Psoas muscle (tissue), 8 donors: ENCODE measurements at regions of chr2 and their contacts with region 1.

Region 1: DNA sequence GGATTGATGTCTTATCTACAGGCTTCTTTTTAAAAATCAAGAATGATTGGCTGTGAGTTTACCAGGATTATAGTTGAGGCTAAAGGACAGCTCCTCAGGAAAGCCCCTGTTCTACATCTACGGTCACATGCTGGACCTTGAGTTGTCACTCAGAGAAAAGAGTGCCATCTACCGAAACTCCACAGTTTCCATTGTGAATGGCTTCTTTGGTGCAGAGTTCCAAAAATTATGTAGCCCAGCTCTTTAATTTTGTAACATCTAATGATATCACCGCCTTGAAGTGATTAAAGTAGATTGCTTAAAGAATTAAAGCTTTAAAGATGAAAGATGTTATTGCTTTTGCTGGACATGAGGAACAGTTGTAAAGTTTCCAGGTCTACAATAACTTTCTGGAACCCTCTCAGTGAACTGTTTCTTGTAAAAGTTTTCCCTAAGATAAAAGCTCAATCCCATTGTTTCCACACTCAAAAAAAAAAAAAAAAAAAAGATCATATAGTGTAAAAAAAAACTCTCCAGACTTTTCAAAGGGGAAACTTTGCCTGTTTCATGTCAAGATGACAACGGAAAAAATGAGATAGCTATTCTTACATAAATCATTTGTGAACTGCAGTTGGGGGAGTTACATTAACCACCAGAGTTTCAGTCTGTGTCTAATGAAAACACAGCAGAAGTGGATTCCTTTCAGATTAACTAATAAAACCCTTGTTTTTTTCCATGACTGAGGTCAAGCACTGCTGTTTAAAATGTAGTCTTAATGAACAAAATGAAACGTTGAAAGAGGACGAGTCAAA is 4.3 kb downstream of the COL3A1 start:
- DNase-seq: no peak
- ATAC-seq: peak in 3 of 4 donors; percentile 41 to 58 (median 47)
- H3K4me3 ChIP-seq: peak overlapping the region; percentile 52
- H3K27ac ChIP-seq: peak overlapping the region; percentile 24
- H3K4me1 ChIP-seq: no peaks in the 10 kb centered on the region
- H3K27me3 ChIP-seq: no peaks in the 10 kb centered on the region
- CTCF ChIP-seq: peak; percentile 16

Region 2: DNA sequence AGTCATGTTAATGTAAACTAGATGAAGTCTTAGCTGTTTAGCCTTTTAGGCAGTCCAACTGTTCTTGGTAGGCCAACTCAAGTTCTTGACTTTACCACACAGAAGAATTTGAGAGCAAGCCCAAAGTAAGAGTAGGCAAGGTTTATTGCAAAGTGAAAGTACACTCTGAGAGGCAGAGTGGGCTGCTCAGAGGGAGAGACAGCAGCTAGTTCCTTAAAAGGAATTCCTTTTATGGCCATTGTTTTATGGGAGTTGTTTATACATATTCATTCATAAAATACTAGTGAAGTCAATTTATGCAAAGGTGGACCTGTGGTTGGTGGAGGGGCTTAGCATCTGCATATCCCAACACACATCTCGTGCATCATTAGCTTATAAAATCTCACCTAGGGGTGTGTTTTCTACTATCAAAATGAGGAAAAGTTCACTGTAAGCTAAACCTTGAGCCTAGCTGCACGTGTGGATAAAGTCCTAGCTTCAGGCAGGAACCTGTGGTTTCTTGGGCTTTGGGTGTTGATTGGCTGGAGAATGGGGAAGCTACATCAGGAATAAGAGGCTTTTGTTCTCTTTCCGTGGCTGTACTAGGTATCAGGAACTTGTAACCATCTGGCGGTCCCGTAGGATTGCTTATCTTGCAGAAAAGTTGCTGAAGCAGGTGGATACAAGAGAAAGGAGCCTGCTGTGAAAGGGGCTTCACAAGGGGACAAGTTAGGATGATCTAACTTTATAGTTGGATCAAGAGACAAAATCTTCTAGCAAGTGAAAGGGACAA is 797.2 kb before region 1 on chr2:
- intact Hi-C with region 1: loop called in 1 of 2 experiments (anchors 10 kb)
- DNase-seq: no peak
- ATAC-seq: no peak
- H3K4me3 ChIP-seq: no peak overlapping the region
- H3K27ac ChIP-seq: no peak overlapping the region
- H3K4me1 ChIP-seq: no peaks in the 10 kb centered on the region
- H3K27me3 ChIP-seq: no peaks in the 10 kb centered on the region
- CTCF ChIP-seq: no peak

Region 3: GRCh38 chr2:188788621-188789020 is 189.9 kb before region 1 on chr2:
- intact Hi-C with region 1: loop called in 1 of 2 experiments (anchors 10 kb)
- DNase-seq: peak; percentile 54 to 66
- ATAC-seq: peak in 3 of 4 donors; percentile 46 to 69 (median 59)
- H3K4me3 ChIP-seq: peak overlapping the region; percentile 29
- H3K27ac ChIP-seq: peak overlapping the region; percentile 38
- H3K4me1 ChIP-seq: no peaks in the 10 kb centered on the region
- H3K27me3 ChIP-seq: no peaks in the 10 kb centered on the region
- CTCF ChIP-seq: no peak

Region 4: DNA sequence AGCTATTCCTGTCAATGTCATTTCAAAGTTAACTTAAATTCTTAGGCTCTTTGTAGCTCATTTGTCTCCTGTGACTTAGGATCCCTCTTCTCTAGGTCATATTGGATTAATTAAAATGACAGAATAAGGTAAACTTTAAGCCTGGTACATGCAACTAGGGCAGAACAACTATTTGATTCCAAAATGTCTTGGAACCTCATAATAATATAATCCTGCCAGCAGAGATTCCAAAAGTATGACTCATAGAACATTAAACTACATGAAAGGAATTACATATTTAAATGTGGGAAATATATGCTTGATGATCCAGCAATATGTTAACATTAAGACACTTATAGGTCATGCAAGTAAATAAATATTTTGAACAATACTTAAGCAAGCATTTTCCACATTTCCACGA is 59.0 kb after region 1 on chr2:
- intact Hi-C with region 1: no loop called
- DNase-seq: no peak
- ATAC-seq: no peak
- H3K4me3 ChIP-seq: no peak overlapping the region
- H3K27ac ChIP-seq: no peak overlapping the region
- H3K4me1 ChIP-seq: no peaks in the 10 kb centered on the region
- H3K27me3 ChIP-seq: no peaks in the 10 kb centered on the region
- CTCF ChIP-seq: no peak